BJ (cell line): ENCODE measurements at regions of chr20 and their contacts with region 1.

Region 1: DNA sequence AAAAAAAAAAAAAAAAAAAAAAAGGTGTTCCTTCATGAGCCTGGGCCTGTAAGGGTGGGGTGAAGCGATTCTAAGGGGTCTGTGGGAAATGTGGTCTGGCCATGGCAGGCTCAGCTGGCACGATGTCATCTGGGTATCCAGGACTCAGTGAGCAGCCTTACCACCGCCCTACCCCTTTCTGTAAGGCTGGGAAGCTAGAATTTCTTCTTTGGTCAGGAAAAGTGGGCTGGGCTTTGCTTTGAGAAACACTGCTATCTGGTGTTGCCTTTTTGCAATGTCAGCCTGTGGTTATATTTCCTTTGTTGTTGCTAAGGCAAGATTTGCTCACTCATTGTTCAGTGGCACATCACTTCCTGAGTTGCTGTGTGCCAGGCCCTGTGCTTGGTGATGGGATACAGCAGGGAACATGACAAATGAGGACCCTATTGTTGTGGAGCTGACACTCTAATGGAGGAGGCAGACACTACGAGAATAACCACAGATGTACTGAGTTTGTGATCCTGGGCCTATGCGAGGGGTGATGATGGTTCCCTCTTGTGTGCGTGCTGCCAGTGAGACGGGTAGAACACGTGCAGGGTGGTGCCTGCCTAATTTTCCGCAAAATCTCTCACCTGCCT is 45.9 kb upstream of the ZNFX1 start:
- DNase-seq: peak; percentile 33
- H3K4me3 ChIP-seq: no peak overlapping the region
- H3K27me3 ChIP-seq: peaks cover 32% of the 10 kb centered on the region
- CTCF ChIP-seq: peak; percentile 56

Region 2: DNA sequence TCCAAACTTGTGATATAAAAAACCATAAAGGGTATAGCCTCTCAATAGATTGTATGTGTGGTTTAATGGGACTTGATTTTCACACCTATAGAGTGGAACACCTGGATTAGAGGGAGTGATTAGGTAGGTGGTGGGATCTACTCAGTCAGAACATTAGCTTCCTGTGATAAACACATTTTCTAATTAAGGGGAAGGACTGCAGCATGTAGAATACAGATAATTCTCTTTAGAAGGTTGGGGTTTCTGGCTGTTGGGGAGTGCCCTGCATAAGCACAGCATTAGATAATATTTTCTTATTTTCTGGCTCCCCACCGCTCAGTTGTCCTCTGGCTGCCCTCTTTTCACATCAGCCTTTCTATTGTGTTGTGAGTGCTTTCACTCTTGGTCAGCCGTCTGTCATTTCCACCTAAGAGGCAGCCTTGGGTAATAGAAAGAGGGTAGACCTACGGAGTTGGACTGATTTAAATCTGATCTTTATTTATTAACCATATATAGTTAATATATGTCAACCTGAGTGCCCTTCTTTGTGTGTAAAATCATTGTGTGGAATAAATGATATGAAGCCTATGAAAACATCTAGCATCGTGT is 269.6 kb before region 1 on chr20:
- CTCF ChIA-PET with region 1: no interaction called
- POLR2A ChIA-PET with region 1: no interaction called
- DNase-seq: no peak
- H3K4me3 ChIP-seq: no peak overlapping the region
- H3K27me3 ChIP-seq: no peaks in the 10 kb centered on the region
- CTCF ChIP-seq: no peak

Region 3: DNA sequence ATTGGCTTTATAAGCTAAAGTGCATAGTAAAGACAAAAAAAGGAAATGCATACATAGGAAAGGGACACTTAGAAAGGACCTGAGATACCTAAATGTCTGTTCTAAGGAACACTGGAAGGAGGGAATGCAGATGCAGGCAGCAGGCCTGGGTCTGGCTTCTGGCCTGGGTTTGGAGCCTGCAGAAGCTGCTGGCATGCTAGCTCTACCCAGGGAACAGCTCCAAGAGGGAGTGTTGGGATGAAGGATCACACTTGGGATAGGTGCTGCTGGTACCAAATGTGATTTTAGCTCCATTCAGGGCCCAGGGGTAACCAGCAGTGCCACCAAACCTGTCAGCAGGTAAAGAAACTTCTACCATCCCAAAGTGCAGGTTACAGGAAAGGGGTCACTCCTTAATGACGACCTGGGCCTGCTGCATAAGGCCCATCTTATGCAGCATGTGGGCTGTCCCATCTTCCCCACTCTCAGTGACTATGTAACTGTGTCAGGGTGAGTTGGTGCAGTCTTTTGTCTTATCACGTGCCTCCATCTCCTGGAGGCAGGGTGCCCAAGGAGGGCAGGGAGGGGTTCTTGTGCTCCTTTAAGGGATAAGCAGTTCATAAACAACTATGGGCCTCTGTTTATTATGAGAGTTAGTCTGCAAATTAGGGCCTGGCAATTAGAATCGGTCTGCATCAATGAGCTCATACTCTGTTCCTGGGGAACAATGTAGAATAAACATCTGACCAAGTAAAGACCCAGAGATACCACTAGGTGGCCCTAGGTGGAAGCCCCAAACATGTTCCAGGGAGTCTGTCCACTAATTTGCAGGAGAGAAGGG is 77.6 kb before region 1 on chr20:
- CTCF ChIA-PET with region 1: interaction called, 75 read pairs
- POLR2A ChIA-PET with region 1: no interaction called
- DNase-seq: no peak
- H3K4me3 ChIP-seq: no peak overlapping the region
- H3K27me3 ChIP-seq: no peaks in the 10 kb centered on the region
- CTCF ChIP-seq: peak; percentile 80

Region 4: GRCh38 chr20:49303065-49303552 is 20.6 kb before region 1 on chr20:
- CTCF ChIA-PET with region 1: interaction called, 12 read pairs
- POLR2A ChIA-PET with region 1: no interaction called
- DNase-seq: peak; percentile 39
- H3K4me3 ChIP-seq: no peak overlapping the region
- H3K27me3 ChIP-seq: no peaks in the 10 kb centered on the region
- CTCF ChIP-seq: no peak

Region 5: GRCh38 chr20:49313283-49313682 is 10.4 kb before region 1 on chr20:
- CTCF ChIA-PET with region 1: interaction called, 12 read pairs
- POLR2A ChIA-PET with region 1: no interaction called
- DNase-seq: no peak
- H3K4me3 ChIP-seq: no peak overlapping the region
- H3K27me3 ChIP-seq: peaks cover 13% of the 10 kb centered on the region
- CTCF ChIP-seq: no peak

Region 6: GRCh38 chr20:49361862-49362660 is 38.3 kb after region 1 on chr20:
- CTCF ChIA-PET with region 1: no interaction called
- POLR2A ChIA-PET with region 1: no interaction called
- DNase-seq: no peak
- H3K4me3 ChIP-seq: no peak overlapping the region
- H3K27me3 ChIP-seq: peaks cover 4% of the 10 kb centered on the region; the same call in 1 of the 2 replicates
- CTCF ChIP-seq: no peak